Prostate gland (tissue), 2 donors: ENCODE measurements at regions of chr6 and their contacts with region 1.

Region 1: GRCh38 chr6:85923013-85923430 is 280.3 kb upstream of the SYNCRIP start:
- DNase-seq: peak; percentile 29
- H3K4me3 ChIP-seq: no peak overlapping the region
- H3K27ac ChIP-seq: no peak overlapping the region
- H3K4me1 ChIP-seq: no peaks in the 10 kb centered on the region
- H3K27me3 ChIP-seq: no peaks in the 10 kb centered on the region
- CTCF ChIP-seq: peak in 3 of 4 experiments; percentile 40 to 58 (median 56)
- POLR2A ChIP-seq: no peak

Region 2: GRCh38 chr6:86856937-86857563 is 934.0 kb after region 1 on chr6:
- intact Hi-C with region 1: loop called (anchors 5 kb)
- DNase-seq: peak; percentile 37
- H3K4me3 ChIP-seq: no peak overlapping the region
- H3K27ac ChIP-seq: no peak overlapping the region
- H3K4me1 ChIP-seq: no peaks in the 10 kb centered on the region
- H3K27me3 ChIP-seq: no peaks in the 10 kb centered on the region
- CTCF ChIP-seq: peak; percentile 36 to 64 (median 52)
- POLR2A ChIP-seq: no peak

Region 3: DNA sequence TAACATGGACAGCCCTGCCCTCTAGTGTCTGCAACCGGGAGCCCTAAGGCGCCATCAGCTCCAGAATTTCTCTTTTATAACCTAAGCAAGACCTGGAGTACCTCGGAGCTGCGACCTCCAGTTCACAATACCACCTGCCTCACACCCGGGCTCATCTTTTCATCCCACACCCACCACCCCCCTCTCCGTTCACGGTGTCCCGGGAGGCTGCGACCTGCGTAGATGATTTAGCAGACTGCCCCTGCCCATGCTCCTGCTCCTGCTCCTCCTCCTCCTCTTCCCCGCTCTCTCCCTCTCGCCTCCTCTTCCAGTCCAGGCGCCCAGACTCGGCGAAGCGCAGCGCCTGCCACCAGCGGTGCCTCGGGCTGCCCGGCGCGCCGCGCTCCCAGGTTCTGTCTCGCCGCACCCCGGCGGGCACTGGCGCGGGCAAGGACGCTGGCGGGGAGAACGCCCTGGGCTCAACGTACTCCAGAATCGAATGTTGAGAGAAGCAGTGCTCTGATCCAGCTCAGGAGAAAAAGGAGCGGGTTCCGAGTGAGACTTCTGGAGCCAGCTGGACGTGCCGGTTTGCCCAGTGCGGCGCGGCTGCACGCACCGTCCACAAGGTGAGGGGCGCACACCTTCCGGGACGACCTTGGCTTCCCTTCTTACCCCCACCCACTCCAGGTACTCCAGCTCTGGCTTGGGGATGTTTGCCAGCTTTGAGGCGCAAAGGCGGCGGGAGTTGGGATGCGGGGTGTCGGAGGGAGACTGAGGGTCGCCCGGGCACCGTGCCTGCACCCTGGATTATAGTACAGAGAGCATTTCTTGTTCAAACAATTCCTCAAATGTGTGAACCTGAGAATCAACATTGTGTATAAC is 1014.4 kb after region 1 on chr6 and contains the start of gene HTR1E:
- intact Hi-C with region 1: loop called (anchors 10 kb)
- DNase-seq: peak; percentile 9
- H3K4me3 ChIP-seq: peak within 1 kb of the TSS; percentile 18 to 27
- H3K27ac ChIP-seq: no peak within 1 kb of the TSS
- H3K4me1 ChIP-seq: no peaks in the 10 kb centered on the region
- H3K27me3 ChIP-seq: no peaks in the 10 kb centered on the region
- CTCF ChIP-seq: peak in 3 of 4 experiments; percentile 27 to 31 (median 30)
- POLR2A ChIP-seq: no peak
- total RNA-seq, gene HTR1E: not detected

Region 4: GRCh38 chr6:87029711-87030314 is 1106.8 kb after region 1 on chr6:
- intact Hi-C with region 1: loop called (anchors 10 kb)
- DNase-seq: no peak
- H3K4me3 ChIP-seq: no peak overlapping the region
- H3K27ac ChIP-seq: no peak overlapping the region
- H3K4me1 ChIP-seq: no peaks in the 10 kb centered on the region
- H3K27me3 ChIP-seq: no peaks in the 10 kb centered on the region
- CTCF ChIP-seq: peak in 3 of 4 experiments; percentile 22 to 32 (median 30)
- POLR2A ChIP-seq: no peak